Gastrocnemius medialis (tissue), 4 donors: ENCODE measurements at regions of chr6 and their contacts with region 1.

Region 1: GRCh38 chr6:108896111-108896661 is 48.0 kb downstream of the ARMC2 start:
- DNase-seq: no peak
- ATAC-seq: no peak
- H3K4me3 ChIP-seq: no peak overlapping the region
- H3K27ac ChIP-seq: peak overlapping the region; percentile 55 to 75 (median 62)
- H3K4me1 ChIP-seq: peaks cover 31 to 37% of the 10 kb centered on the region in 2 donors
- H3K27me3 ChIP-seq: no peaks in the 10 kb centered on the region
- CTCF ChIP-seq: no peak
- POLR2A ChIP-seq: no peak

Region 2: GRCh38 chr6:108755257-108756240 is 140.6 kb before region 1 on chr6:
- in situ Hi-C with region 1: no loop called
- intact Hi-C with region 1: no loop called
- DNase-seq: no peak
- ATAC-seq: peak in 1 of 2 donors; percentile 18
- H3K4me3 ChIP-seq: no peak overlapping the region
- H3K27ac ChIP-seq: peak overlapping the region in 2 of 4 donors; percentile 16 to 18
- H3K4me1 ChIP-seq: peaks cover 13 to 17% of the 10 kb centered on the region in 2 donors
- H3K27me3 ChIP-seq: no peaks in the 10 kb centered on the region
- CTCF ChIP-seq: no peak
- POLR2A ChIP-seq: no peak

Region 3: DNA sequence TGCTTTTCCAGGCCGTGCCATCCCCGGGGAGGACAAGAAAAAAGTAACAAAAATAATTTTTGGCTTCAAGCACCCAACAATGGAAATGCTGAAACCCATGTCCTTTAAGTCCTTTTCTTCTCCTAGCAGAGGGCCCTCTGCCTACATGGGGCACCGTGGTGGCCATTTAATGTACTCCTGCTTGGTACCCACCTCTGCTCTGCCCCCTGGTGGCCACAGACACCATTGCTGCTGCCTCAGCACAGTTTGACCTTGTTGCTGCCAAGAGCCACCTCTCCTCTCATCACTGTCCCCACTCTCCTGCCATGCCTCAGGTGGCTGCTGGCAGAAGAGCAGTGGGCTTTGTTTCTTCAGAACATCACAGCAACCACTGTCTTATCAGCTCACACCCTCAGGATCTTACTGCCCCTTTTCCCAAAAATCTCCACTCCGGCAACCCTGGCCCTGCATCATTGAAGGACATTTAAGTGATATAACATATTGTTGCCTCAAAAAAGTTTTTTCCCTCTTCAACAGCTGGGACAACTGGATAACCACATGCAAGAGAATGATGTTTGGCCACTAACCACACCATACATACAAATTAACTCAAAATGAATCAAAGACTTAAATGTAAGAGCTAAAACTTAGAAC is 60.9 kb before region 1 on chr6:
- in situ Hi-C with region 1: loop called in 1 of 4 experiments (anchors 10 kb)
- intact Hi-C with region 1: loop called (anchors 1 kb)
- DNase-seq: peak; percentile 80 to 89
- ATAC-seq: peak; percentile 92 to 99
- H3K4me3 ChIP-seq: no peak overlapping the region
- H3K27ac ChIP-seq: peak overlapping the region in 3 of 4 donors; percentile 19 to 59 (median 40)
- H3K4me1 ChIP-seq: peaks cover 6% of the 10 kb centered on the region in 2 donors
- H3K27me3 ChIP-seq: no peaks in the 10 kb centered on the region
- CTCF ChIP-seq: peak; percentile 91 to 97 (median 92)
- POLR2A ChIP-seq: no peak